ENCODE measurements at regions of chr3 and their contacts with region 1.

Region 1: DNA sequence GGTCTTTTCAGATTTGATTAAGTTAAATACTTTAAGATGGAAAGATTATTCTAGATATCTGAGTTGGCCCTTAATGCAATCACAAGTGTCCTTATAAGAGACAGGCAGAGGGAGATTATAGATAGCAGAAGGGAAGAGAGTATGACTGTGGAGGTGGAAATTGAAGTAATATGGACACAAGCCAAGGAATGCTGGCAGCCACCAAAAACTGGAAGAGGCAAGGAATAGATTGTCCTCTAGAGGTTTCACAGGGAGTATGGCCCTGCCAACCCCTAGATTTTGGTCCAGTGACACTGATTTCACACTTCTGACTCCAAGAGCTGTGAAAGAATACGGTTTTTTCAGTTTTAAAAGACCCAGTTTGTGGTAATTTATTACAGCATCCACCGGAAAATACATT is 1498.7 kb upstream of the CADM2 start:
- DNase-seq: no peak
- H3K4me3 Mint-ChIP-seq: no peak overlapping the region
- H3K27ac Mint-ChIP-seq: no peak overlapping the region
- H3K4me1 Mint-ChIP-seq: no peaks in the 10 kb centered on the region
- H3K27me3 Mint-ChIP-seq: no peaks in the 10 kb centered on the region

Region 2: DNA sequence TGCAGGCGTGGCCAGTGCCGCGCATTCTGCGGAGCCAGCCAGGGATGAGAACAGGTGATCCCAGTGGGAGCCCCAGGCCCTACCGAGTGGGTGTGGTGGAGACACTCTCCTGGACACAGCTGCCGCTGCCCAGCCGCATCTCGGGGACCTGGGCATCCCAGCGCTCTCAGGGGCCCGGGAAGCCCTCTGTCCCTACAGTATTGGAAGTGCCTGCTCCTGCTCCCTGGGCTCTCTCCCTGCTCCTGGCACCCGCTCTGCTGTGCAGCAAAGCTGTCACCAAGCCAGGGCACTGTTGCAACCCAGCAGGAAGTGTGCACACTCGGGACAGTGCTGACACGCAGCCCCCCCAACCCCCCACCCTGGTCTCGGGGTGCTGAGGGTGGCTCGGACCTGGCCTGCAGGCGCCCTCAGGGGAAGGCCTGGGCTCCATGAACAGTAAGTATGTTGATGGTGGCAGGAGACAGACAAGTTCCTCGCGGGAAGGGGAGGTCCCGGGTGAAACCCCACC is 521.2 kb before region 1 on chr3:
- intact Hi-C with region 1: no loop called
- DNase-seq: no peak
- H3K4me3 Mint-ChIP-seq: no peak overlapping the region
- H3K27ac Mint-ChIP-seq: no peak overlapping the region
- H3K4me1 Mint-ChIP-seq: no peaks in the 10 kb centered on the region
- H3K27me3 Mint-ChIP-seq: no peaks in the 10 kb centered on the region

Region 3: GRCh38 chr3:83581546-83581945 is 121.5 kb after region 1 on chr3:
- intact Hi-C with region 1: no loop called
- DNase-seq: no peak
- H3K4me3 Mint-ChIP-seq: no peak overlapping the region
- H3K27ac Mint-ChIP-seq: no peak overlapping the region
- H3K4me1 Mint-ChIP-seq: no peaks in the 10 kb centered on the region
- H3K27me3 Mint-ChIP-seq: no peaks in the 10 kb centered on the region

Region 4: GRCh38 chr3:83670416-83670815 is 210.4 kb after region 1 on chr3:
- intact Hi-C with region 1: no loop called
- DNase-seq: no peak
- H3K4me3 Mint-ChIP-seq: no peak overlapping the region
- H3K27ac Mint-ChIP-seq: no peak overlapping the region
- H3K4me1 Mint-ChIP-seq: no peaks in the 10 kb centered on the region
- H3K27me3 Mint-ChIP-seq: no peaks in the 10 kb centered on the region

Region 5: GRCh38 chr3:83953417-83954089 is 493.5 kb after region 1 on chr3:
- intact Hi-C with region 1: loop called (anchors 10 kb)
- DNase-seq: no peak
- H3K4me3 Mint-ChIP-seq: no peak overlapping the region
- H3K27ac Mint-ChIP-seq: no peak overlapping the region
- H3K4me1 Mint-ChIP-seq: no peaks in the 10 kb centered on the region
- H3K27me3 Mint-ChIP-seq: no peaks in the 10 kb centered on the region